ENCODE measurements at regions of chr6 and their contacts with region 1.

Region 1: GRCh38 chr6:99232056-99232455 is 117.4 kb downstream of the FAXC start:
- DNase-seq: no peak
- H3K4me3 ChIP-seq: no peak overlapping the region
- H3K27ac ChIP-seq: no peak overlapping the region
- H3K4me1 ChIP-seq: no peaks in the 10 kb centered on the region
- H3K27me3 ChIP-seq: no peaks in the 10 kb centered on the region
- CTCF ChIP-seq: no peak
- EP300 ChIP-seq: no peak
- POLR2A ChIP-seq: no peak

Region 2: GRCh38 chr6:99013145-99013544 is 218.9 kb before region 1 on chr6:
- intact Hi-C with region 1: loop called in 1 of 4 experiments (anchors 5 kb)
- DNase-seq: no peak
- H3K4me3 ChIP-seq: no peak overlapping the region
- H3K27ac ChIP-seq: no peak overlapping the region
- H3K4me1 ChIP-seq: no peaks in the 10 kb centered on the region
- H3K27me3 ChIP-seq: no peaks in the 10 kb centered on the region
- CTCF ChIP-seq: no peak
- EP300 ChIP-seq: no peak
- POLR2A ChIP-seq: no peak

Measured in ovary (tissue), 10 donors.